Psoas muscle (tissue), 8 donors: ENCODE measurements at regions of chr6 and their contacts with region 1.

Region 1: DNA sequence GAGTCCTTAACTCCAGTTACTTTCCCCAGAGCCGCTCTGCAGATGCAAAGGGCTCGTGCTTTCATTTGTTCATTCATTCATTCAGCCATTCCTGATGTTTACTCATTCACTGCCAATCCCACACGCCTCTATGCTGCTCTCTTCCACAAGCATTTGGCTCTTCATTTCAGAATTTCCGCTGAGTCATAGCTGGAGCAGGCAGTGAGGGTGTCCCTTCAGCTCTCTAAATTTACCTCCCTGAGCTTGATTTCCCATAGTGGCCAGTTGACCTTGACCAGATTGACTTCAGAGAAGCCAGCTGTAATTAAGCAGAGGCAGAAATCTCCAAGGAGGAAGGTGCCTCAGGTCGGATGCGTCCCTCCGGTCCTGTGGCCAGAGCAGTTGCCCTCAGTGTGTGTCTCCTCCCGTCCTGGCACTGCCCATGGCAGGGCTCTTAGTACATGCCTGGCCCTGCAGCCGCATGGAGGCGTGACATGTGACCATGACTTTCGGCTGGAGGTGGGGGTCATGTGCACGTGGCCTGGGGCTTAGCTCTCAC is 267.1 kb upstream of the ECI2 start:
- DNase-seq: peak; percentile 42 to 81
- ATAC-seq: peak; percentile 80 to 89 (median 82)
- H3K4me3 ChIP-seq: peak overlapping the region; percentile 23
- H3K27ac ChIP-seq: peak overlapping the region; percentile 91
- H3K4me1 ChIP-seq: peaks cover 51% of the 10 kb centered on the region
- H3K27me3 ChIP-seq: no peaks in the 10 kb centered on the region
- CTCF ChIP-seq: no peak

Region 2: DNA sequence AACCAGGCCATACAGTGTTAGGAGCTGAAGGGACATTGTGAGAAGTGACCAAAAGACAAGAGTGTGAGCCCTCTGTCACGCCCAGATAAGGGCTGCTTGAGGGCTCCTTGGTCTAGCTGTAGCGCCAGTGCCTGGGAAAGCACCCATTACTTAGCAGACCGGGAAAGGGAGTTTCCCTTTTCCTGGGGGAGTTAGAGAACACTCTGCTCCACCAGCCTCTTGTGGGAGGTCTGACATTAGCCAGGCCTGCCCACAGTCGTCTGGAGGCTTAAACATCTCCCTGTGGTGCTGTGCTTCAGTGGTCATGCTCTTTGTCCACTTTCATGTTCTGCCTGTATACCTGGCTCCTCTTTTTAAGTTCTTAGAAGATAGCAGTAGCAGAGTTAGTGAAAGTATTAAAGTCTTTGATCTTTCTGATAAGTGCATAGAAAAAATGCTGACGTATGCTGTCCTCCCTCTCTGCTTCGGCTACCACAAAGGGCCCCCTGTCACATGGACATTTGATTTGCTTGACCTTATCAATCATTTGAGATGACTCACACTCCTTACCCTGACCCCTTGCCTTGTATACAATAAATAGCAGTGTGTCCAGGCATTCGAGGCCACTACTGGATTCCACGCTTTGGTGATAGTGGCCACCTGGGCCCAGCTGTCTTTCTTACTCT is 65.6 kb before region 1 on chr6:
- intact Hi-C with region 1: no loop called
- DNase-seq: no peak
- ATAC-seq: no peak
- H3K4me3 ChIP-seq: no peak overlapping the region
- H3K27ac ChIP-seq: no peak overlapping the region
- H3K4me1 ChIP-seq: no peaks in the 10 kb centered on the region
- H3K27me3 ChIP-seq: no peaks in the 10 kb centered on the region
- CTCF ChIP-seq: no peak

Region 3: GRCh38 chr6:4369616-4370015 is 32.9 kb before region 1 on chr6:
- intact Hi-C with region 1: loop called (anchors 1 to 5 kb)
- DNase-seq: no peak
- ATAC-seq: peak; percentile 70 to 78 (median 73)
- H3K4me3 ChIP-seq: no peak overlapping the region
- H3K27ac ChIP-seq: peak overlapping the region; percentile 80
- H3K4me1 ChIP-seq: peaks cover 48% of the 10 kb centered on the region
- H3K27me3 ChIP-seq: no peaks in the 10 kb centered on the region
- CTCF ChIP-seq: no peak

Region 4: GRCh38 chr6:4451036-4451454 is 48.5 kb after region 1 on chr6:
- intact Hi-C with region 1: loop called in 1 of 2 experiments (anchors 5 kb)
- DNase-seq: no peak
- ATAC-seq: no peak
- H3K4me3 ChIP-seq: no peak overlapping the region
- H3K27ac ChIP-seq: no peak overlapping the region
- H3K4me1 ChIP-seq: no peaks in the 10 kb centered on the region
- H3K27me3 ChIP-seq: no peaks in the 10 kb centered on the region
- CTCF ChIP-seq: no peak